ENCODE measurements at regions of chr6 and their contacts with region 1.

Region 1: GRCh38 chr6:153231048-153231646 is 100.1 kb upstream of the RGS17 start:
- DNase-seq: peak; percentile 75
- ATAC-seq: no peak
- H3K4me3 Mint-ChIP-seq: no peak overlapping the region
- H3K27ac Mint-ChIP-seq: no peak overlapping the region
- H3K4me1 Mint-ChIP-seq: no peaks in the 10 kb centered on the region
- H3K27me3 Mint-ChIP-seq: peaks cover 8% of the 10 kb centered on the region

Region 2: GRCh38 chr6:153312641-153313040 is 81.5 kb after region 1 on chr6:
- CTCF ChIA-PET with region 1: interaction called, 3 read pairs
- POLR2A ChIA-PET with region 1: no interaction called
- intact Hi-C with region 1: loop called in 1 of 2 experiments (anchors 1 kb)
- DNase-seq: peak; percentile 65
- ATAC-seq: peak; percentile 51
- H3K4me3 Mint-ChIP-seq: no peak overlapping the region
- H3K27ac Mint-ChIP-seq: no peak overlapping the region
- H3K4me1 Mint-ChIP-seq: no peaks in the 10 kb centered on the region
- H3K27me3 Mint-ChIP-seq: peaks cover 2% of the 10 kb centered on the region

Region 3: GRCh38 chr6:153511896-153512496 is 280.8 kb after region 1 on chr6:
- CTCF ChIA-PET with region 1: interaction called, 3 read pairs
- POLR2A ChIA-PET with region 1: no interaction called
- intact Hi-C with region 1: loop called (anchors 1 to 5 kb)
- DNase-seq: peak; percentile 5
- ATAC-seq: no peak
- H3K4me3 Mint-ChIP-seq: no peak overlapping the region
- H3K27ac Mint-ChIP-seq: no peak overlapping the region
- H3K4me1 Mint-ChIP-seq: no peaks in the 10 kb centered on the region
- H3K27me3 Mint-ChIP-seq: no peaks in the 10 kb centered on the region

Region 4: GRCh38 chr6:153790876-153791473 is 559.8 kb after region 1 on chr6:
- CTCF ChIA-PET with region 1: interaction called, 3 read pairs
- POLR2A ChIA-PET with region 1: no interaction called
- intact Hi-C with region 1: loop called in 1 of 2 experiments (anchors 1 kb)
- DNase-seq: peak; percentile 7
- ATAC-seq: no peak
- H3K4me3 Mint-ChIP-seq: no peak overlapping the region
- H3K27ac Mint-ChIP-seq: no peak overlapping the region
- H3K4me1 Mint-ChIP-seq: no peaks in the 10 kb centered on the region
- H3K27me3 Mint-ChIP-seq: peaks cover 2% of the 10 kb centered on the region

Region 5: DNA sequence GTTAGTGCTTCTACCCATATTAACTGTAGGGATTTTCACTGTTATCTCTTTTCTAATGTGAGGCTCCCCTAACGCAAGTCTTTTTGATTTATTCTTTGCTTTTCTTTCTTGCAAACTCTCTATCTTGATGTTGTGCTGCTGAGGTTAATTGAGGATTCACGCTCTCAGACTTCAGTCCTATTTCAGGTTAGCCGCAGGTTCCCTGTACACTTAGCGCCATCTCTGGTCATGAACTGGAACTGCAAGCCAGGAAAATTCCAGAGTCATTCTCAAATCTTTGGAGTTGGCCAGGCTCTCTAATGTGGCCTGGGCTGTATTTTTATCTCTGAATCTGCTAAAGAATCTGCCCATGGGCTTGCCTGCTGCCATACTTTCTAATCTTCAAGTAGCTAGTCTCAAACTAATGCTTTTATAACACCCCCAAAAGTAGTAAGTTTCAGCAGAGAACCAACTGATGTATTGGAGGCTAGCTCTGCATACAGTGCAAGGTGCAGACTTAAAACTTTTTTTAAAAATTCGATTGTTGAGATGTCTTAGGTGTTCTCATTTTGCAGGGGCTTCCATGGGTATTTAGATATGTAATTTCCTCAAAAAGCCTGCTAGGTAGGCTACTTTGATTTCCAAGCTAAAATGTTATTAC is 716.8 kb after region 1 on chr6:
- CTCF ChIA-PET with region 1: interaction called, 6 read pairs
- POLR2A ChIA-PET with region 1: no interaction called
- intact Hi-C with region 1: loop called in 1 of 2 experiments (anchors 5 kb)
- DNase-seq: peak; percentile 14
- ATAC-seq: no peak
- H3K4me3 Mint-ChIP-seq: no peak overlapping the region
- H3K27ac Mint-ChIP-seq: no peak overlapping the region
- H3K4me1 Mint-ChIP-seq: no peaks in the 10 kb centered on the region
- H3K27me3 Mint-ChIP-seq: peaks cover 2% of the 10 kb centered on the region

Measured in activated CD4-positive, alpha-beta T cell treated with anti-CD3 and anti-CD28 coated beads for 36 hours (primary cell).